ENCODE measurements at regions of chr6 and their contacts with region 1.

Region 1: DNA sequence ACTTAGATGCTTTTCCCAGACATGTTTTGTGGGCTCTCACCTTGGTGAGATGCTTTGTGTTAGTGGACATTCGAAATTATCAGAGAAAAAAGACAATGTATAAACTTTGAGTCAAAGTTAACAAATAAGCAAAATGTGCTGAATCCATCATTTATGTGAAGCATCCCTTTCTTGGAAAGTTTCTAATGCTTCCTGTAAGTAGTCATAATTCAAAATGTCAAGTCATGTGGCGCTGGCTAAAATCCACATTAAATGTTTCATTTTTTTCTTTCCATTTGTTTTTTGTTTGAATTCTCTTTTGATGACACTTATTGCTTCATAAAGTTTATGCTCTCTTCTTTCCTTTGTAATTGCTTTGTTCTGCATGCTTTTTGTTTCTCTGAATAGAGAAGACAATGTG is 107.2 kb upstream of the CENPW start:
- DNase-seq: no peak
- H3K4me3 ChIP-seq: no peak overlapping the region
- H3K27ac ChIP-seq: no peak overlapping the region
- H3K4me1 ChIP-seq: no peaks in the 10 kb centered on the region
- H3K27me3 ChIP-seq: no peaks in the 10 kb centered on the region
- CTCF ChIP-seq: no peak
- POLR2A ChIP-seq: no peak

Region 2: DNA sequence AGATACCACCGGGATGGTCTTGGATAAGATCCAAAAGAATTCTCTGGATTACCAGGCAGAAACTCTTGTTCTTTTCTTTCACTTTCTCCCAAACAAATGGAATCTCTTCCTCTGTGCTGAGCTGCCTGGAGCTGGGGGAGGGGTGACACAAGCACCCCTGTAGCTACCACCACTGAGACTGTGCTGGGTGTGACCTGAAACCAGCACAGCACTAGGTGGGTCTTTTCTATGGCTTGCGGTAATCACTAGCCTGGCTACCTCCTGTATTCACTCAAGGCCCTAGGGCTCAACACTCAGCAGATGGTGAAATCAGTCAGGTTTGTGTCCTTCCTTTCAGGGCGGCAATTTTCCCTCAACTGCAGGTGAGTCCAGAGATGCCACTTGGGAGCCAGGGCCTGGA is 15.2 kb before region 1 on chr6:
- CTCF ChIA-PET with region 1: no interaction called
- POLR2A ChIA-PET with region 1: no interaction called
- dilution Hi-C with region 1: no loop called
- intact Hi-C with region 1: loop called (anchors 1 kb)
- DNase-seq: no peak
- H3K4me3 ChIP-seq: no peak overlapping the region
- H3K27ac ChIP-seq: no peak overlapping the region
- H3K4me1 ChIP-seq: no peaks in the 10 kb centered on the region
- H3K27me3 ChIP-seq: no peaks in the 10 kb centered on the region
- CTCF ChIP-seq: no peak
- POLR2A ChIP-seq: no peak